ENCODE measurements at regions of chr12 and their contacts with region 1.

Region 1: GRCh38 chr12:8544295-8544694 is 3.6 kb upstream of the CLEC4E start:
- DNase-seq: peak; percentile 82
- ATAC-seq: peak; percentile 80
- H3K4me3 Mint-ChIP-seq: no peak overlapping the region
- H3K27ac Mint-ChIP-seq: no peak overlapping the region
- H3K4me1 Mint-ChIP-seq: peaks cover 9% of the 10 kb centered on the region
- H3K27me3 Mint-ChIP-seq: peaks cover 31% of the 10 kb centered on the region
- CTCF ChIP-seq: peak; percentile 94

Region 2: DNA sequence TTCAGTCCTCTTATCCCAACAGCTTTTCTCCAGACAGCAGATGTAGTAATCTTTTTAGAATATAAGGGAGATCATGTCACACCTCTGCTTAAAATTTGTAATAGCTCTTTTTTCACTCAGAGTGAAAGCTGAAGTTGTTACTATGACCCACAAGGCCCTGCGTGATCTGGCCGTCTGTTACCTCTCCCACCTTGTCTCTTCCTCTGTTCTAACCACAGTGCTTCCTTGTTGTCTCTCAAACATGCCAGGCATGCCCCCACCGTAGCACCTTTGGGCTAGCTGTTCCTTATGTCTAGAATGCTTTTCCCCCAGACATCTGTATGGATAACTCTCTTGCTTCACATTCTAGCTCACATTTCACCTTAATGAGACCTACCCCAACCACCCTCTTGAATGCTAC is 455.7 kb before region 1 on chr12:
- CTCF ChIA-PET with region 1: no interaction called
- POLR2A ChIA-PET with region 1: no interaction called
- intact Hi-C with region 1: no loop called
- DNase-seq: peak; percentile 67
- ATAC-seq: peak; percentile 77
- H3K4me3 Mint-ChIP-seq: peak overlapping the region; percentile 52
- H3K27ac Mint-ChIP-seq: peak overlapping the region; percentile 94
- H3K4me1 Mint-ChIP-seq: peaks cover 45% of the 10 kb centered on the region
- H3K27me3 Mint-ChIP-seq: no peaks in the 10 kb centered on the region
- CTCF ChIP-seq: no peak

Region 3: GRCh38 chr12:8493084-8493483 is 51.2 kb before region 1 on chr12:
- CTCF ChIA-PET with region 1: interaction called, 22 read pairs
- POLR2A ChIA-PET with region 1: no interaction called
- intact Hi-C with region 1: no loop called
- DNase-seq: peak; percentile 82
- ATAC-seq: peak; percentile 91
- H3K4me3 Mint-ChIP-seq: peak overlapping the region; percentile 2
- H3K27ac Mint-ChIP-seq: peak overlapping the region; percentile 66
- H3K4me1 Mint-ChIP-seq: peaks cover 28% of the 10 kb centered on the region
- H3K27me3 Mint-ChIP-seq: peaks cover 11% of the 10 kb centered on the region
- CTCF ChIP-seq: no peak

Region 4: GRCh38 chr12:8554451-8555195 is 10.3 kb after region 1 on chr12:
- CTCF ChIA-PET with region 1: interaction called, 22 read pairs
- POLR2A ChIA-PET with region 1: no interaction called
- intact Hi-C with region 1: no loop called
- DNase-seq: no peak
- ATAC-seq: no peak
- H3K4me3 Mint-ChIP-seq: no peak overlapping the region
- H3K27ac Mint-ChIP-seq: no peak overlapping the region
- H3K4me1 Mint-ChIP-seq: no peaks in the 10 kb centered on the region
- H3K27me3 Mint-ChIP-seq: no peaks in the 10 kb centered on the region
- CTCF ChIP-seq: no peak

Region 5: DNA sequence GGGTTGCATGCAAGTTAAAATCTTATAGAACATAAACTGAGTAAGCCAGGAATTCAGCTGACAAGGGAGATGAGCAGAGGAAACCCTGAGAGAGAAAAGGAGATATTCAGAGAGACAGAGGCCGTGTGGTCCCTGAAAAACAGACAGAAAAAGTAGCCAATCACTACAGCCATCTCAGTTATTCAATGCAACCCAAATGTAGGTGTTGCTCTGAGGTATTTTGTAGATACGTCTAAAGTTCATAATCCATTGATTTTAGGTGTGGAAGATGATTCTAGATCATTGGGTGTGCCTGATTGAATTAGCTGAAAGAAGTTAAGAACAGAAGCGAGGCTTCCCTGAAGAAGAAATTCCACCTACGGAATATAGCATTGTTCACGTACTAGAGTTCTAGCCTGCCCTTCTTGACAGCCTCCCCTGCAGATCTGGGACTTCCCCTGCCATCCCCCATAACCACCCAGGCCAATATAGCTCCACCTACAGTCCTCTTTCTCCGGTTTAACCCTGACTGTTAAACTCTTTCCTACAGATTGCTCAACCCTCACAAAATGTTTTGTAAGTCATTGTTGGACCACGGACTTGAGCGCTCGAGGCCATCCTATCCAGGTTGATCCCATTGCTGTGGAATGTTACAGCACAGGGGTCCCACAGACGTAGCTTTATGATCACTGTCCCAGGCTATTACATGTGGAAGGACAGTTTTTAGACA is 46.7 kb after region 1 on chr12:
- CTCF ChIA-PET with region 1: interaction called, 24 read pairs
- POLR2A ChIA-PET with region 1: no interaction called
- intact Hi-C with region 1: no loop called
- DNase-seq: peak; percentile 53
- ATAC-seq: peak; percentile 98
- H3K4me3 Mint-ChIP-seq: no peak overlapping the region
- H3K27ac Mint-ChIP-seq: no peak overlapping the region
- H3K4me1 Mint-ChIP-seq: peaks cover 10% of the 10 kb centered on the region
- H3K27me3 Mint-ChIP-seq: no peaks in the 10 kb centered on the region
- CTCF ChIP-seq: no peak

Region 6: GRCh38 chr12:8681041-8681902 is 137.0 kb after region 1 on chr12:
- CTCF ChIA-PET with region 1: interaction called, 10 read pairs
- POLR2A ChIA-PET with region 1: no interaction called
- intact Hi-C with region 1: no loop called
- DNase-seq: no peak
- ATAC-seq: no peak
- H3K4me3 Mint-ChIP-seq: no peak overlapping the region
- H3K27ac Mint-ChIP-seq: no peak overlapping the region
- H3K4me1 Mint-ChIP-seq: no peaks in the 10 kb centered on the region
- H3K27me3 Mint-ChIP-seq: no peaks in the 10 kb centered on the region
- CTCF ChIP-seq: no peak

Region 7: GRCh38 chr12:8890313-8891085 is 346.2 kb after region 1 on chr12:
- CTCF ChIA-PET with region 1: interaction called, 20 read pairs
- POLR2A ChIA-PET with region 1: no interaction called
- intact Hi-C with region 1: no loop called
- DNase-seq: peak; percentile 66
- ATAC-seq: peak; percentile 88
- H3K4me3 Mint-ChIP-seq: peak overlapping the region; percentile 75
- H3K27ac Mint-ChIP-seq: peak overlapping the region; percentile 21
- H3K4me1 Mint-ChIP-seq: peaks cover 13% of the 10 kb centered on the region
- H3K27me3 Mint-ChIP-seq: no peaks in the 10 kb centered on the region
- CTCF ChIP-seq: peak; percentile 96